Caco-2 (cell line): ENCODE measurements at regions of chr6 and their contacts with region 1.

Region 1: DNA sequence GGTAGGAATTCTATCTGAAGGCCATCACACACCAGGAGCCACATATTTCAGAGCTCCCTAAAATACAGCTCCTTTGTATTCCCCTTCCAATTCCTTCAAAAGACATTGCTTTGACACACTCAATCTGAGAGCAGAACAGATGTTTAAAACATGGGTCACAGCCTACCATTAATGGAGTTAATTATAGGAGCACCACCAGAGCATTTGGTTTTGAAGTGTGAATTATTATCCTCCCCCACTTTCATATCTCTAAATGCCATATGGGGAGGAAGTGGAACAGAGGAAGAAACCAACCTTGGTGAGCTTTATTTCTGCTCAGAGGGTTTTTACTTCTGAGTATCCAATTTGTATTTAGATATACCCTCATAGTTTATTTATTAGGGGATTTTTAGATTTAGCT is 50.7 kb upstream of the TNFRSF21 start:
- DNase-seq: no peak
- H3K4me3 ChIP-seq: no peak overlapping the region
- H3K4me3 Mint-ChIP-seq: no peak overlapping the region
- H3K27ac Mint-ChIP-seq: no peak overlapping the region
- H3K4me1 ChIP-seq: peaks cover 21% of the 10 kb centered on the region
- H3K4me1 Mint-ChIP-seq: peaks cover 19% of the 10 kb centered on the region
- H3K27me3 ChIP-seq: no peaks in the 10 kb centered on the region
- H3K27me3 Mint-ChIP-seq: no peaks in the 10 kb centered on the region
- CTCF ChIP-seq: no peak

Region 2: GRCh38 chr6:47321577-47321976 is 38.8 kb before region 1 on chr6:
- CTCF ChIA-PET with region 1: no interaction called
- POLR2A ChIA-PET with region 1: no interaction called
- intact Hi-C with region 1: loop called (anchors 2 kb)
- DNase-seq: no peak
- H3K4me3 ChIP-seq: no peak overlapping the region
- H3K4me3 Mint-ChIP-seq: peak overlapping the region; percentile 5
- H3K27ac Mint-ChIP-seq: peak overlapping the region; percentile 84
- H3K4me1 ChIP-seq: peaks cover 49% of the 10 kb centered on the region
- H3K4me1 Mint-ChIP-seq: peaks cover 43% of the 10 kb centered on the region
- H3K27me3 ChIP-seq: no peaks in the 10 kb centered on the region
- H3K27me3 Mint-ChIP-seq: no peaks in the 10 kb centered on the region
- CTCF ChIP-seq: no peak

Region 3: GRCh38 chr6:47603995-47604394 is 243.6 kb after region 1 on chr6:
- CTCF ChIA-PET with region 1: no interaction called
- POLR2A ChIA-PET with region 1: no interaction called
- intact Hi-C with region 1: no loop called
- DNase-seq: no peak
- H3K4me3 ChIP-seq: no peak overlapping the region
- H3K4me3 Mint-ChIP-seq: no peak overlapping the region
- H3K27ac Mint-ChIP-seq: no peak overlapping the region
- H3K4me1 ChIP-seq: no peaks in the 10 kb centered on the region
- H3K4me1 Mint-ChIP-seq: no peaks in the 10 kb centered on the region
- H3K27me3 ChIP-seq: no peaks in the 10 kb centered on the region
- H3K27me3 Mint-ChIP-seq: no peaks in the 10 kb centered on the region
- CTCF ChIP-seq: no peak

Region 4: GRCh38 chr6:48116699-48117645 is 756.6 kb after region 1 on chr6:
- CTCF ChIA-PET with region 1: no interaction called
- POLR2A ChIA-PET with region 1: no interaction called
- intact Hi-C with region 1: no loop called
- DNase-seq: no peak
- H3K4me3 ChIP-seq: no peak overlapping the region
- H3K4me3 Mint-ChIP-seq: no peak overlapping the region
- H3K27ac Mint-ChIP-seq: no peak overlapping the region
- H3K4me1 ChIP-seq: no peaks in the 10 kb centered on the region
- H3K4me1 Mint-ChIP-seq: no peaks in the 10 kb centered on the region
- H3K27me3 ChIP-seq: no peaks in the 10 kb centered on the region
- H3K27me3 Mint-ChIP-seq: no peaks in the 10 kb centered on the region
- CTCF ChIP-seq: no peak